Head of caudate nucleus (tissue), 42 donors: ENCODE measurements at regions of chr15 and their contacts with region 1.

Region 1: GRCh38 chr15:64893481-64894394 is 18.0 kb upstream of the ANKDD1A start:
- DNase-seq: peak; percentile 82 to 96 (median 91)

Region 2: DNA sequence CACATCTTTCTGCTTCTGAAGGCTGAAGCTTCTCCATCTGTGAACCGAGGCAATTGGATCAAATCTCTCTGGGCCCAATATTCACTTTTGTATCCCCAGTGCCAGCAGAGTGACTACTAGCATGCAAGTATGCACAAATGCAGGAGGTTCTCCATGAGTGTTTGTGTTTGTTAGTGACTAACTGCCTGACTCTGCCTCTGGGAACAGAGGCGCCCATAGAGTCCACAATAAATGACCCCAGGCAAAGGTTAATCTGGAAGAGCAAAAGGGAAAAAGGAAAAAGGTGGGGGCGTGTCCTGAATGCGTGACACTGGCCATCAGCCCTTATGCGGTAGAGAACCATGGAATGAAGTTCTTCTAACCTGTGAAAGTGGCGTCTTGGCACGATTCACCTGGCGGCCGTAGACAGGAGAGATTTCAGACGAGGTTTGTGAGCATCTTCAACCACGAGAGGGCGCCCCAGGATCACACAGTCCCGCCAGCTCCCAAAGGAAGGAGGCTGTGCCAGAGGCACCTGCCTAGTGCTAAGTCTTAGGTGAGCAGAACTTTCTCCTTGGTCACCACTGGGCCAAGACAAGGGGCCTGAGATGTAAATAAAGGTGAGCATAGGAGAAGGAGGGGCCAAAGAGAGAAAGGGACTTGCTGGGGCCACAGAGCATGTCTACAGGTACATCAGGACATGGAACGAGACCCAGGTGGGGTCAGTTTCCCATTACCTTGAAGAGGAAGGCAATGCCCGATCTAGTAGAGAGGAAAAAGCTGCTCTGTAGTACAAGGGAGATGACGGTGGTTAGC is 162.5 kb before region 1 on chr15:
- intact Hi-C with region 1: loop called (anchors 5 kb)
- DNase-seq: peak; percentile 77 to 95 (median 90)

Region 3: GRCh38 chr15:64841258-64842095 is 52.3 kb before region 1 on chr15 and contains the start of gene PLEKHO2:
- intact Hi-C with region 1: loop called (anchors 10 kb)
- DNase-seq: peak; percentile 79 to 98 (median 92)